RWPE1 (cell line): ENCODE measurements at regions of chr10 and their contacts with region 1.

Region 1: DNA sequence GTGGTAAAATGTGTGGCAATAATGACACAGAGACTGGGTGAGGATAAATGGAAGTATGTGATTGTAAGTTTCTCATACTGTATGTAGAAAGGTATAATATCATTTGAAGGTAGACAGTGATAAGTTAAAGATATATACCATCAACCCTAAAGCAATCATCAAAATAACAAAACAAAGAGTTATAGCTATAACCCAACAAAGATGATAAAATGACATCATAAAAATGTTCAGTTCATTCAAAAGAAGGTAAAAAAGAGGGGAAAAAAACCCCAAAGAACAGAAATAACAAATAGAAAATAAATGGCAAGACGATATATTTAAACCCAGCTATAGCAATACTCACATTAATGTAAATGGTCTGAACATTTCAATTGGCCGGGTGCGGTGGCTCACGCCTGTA is 17.4 kb upstream of the TCF7L2 start:
- DNase-seq: no peak
- H3K27ac ChIP-seq: no peak overlapping the region
- CTCF ChIP-seq: no peak

Region 2: GRCh38 chr10:112896273-112896672 is 36.4 kb before region 1 on chr10:
- CTCF ChIA-PET with region 1: interaction called, 10 read pairs
- POLR2A ChIA-PET with region 1: no interaction called
- DNase-seq: no peak
- H3K27ac ChIP-seq: no peak overlapping the region
- CTCF ChIP-seq: no peak